ENCODE measurements at regions of chr11 and their contacts with region 1.

Region 1: DNA sequence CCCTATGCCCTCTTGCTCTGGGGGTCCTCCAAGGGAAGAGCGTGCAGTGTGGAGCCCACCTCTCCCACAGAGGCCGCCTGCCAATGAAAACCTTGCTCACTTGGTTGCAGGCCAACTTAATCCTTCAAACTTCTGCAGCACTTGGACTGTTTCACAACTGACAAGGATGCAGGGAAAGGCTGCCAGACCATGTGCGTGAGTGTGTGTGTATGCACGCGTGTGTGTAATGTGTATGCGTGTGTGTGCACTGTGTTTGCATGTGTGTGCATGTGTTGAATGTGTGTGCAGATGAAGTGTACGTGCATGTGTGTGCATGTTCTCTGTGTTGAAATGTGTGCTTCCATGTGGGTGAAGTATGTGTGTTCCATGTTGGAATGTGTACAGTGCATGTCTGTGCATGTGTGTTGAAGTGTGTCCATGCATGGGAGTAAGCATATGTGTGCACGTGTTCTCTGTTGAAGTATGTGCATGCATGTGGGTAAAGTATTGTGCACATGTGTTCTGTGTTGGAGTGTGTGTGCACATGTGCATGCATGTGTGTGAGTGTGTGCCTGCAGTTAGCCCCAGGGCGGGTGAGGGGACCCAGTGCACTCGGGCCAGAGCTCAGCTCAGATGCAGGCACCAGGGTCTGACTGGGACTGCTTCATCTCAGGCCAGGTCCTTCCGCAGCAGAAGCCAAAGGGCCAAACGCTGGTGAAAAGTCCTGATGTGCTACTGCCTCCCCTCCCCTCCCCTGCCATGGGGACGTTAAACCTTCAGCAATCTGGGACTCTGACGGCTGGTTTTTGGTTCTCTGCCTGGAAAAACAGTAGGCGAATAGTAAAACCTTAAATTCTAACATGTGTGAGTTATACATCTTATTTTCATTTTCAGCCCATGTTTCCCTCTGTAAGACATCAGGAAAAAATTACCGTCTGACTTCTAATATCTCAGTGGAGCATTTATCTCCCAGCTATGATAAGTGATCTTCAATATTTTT is 72.0 kb downstream of the FLI1 start:
- DNase-seq: no peak
- H3K4me3 ChIP-seq: no peak overlapping the region
- H3K4me3 Mint-ChIP-seq: no peak overlapping the region
- H3K27ac ChIP-seq: no peak overlapping the region
- H3K27ac Mint-ChIP-seq: no peak overlapping the region
- H3K4me1 ChIP-seq: no peaks in the 10 kb centered on the region
- H3K4me1 Mint-ChIP-seq: peaks cover 4% of the 10 kb centered on the region
- H3K27me3 ChIP-seq: no peaks in the 10 kb centered on the region
- H3K27me3 Mint-ChIP-seq: no peaks in the 10 kb centered on the region
- CTCF ChIP-seq: no peak

Region 2: DNA sequence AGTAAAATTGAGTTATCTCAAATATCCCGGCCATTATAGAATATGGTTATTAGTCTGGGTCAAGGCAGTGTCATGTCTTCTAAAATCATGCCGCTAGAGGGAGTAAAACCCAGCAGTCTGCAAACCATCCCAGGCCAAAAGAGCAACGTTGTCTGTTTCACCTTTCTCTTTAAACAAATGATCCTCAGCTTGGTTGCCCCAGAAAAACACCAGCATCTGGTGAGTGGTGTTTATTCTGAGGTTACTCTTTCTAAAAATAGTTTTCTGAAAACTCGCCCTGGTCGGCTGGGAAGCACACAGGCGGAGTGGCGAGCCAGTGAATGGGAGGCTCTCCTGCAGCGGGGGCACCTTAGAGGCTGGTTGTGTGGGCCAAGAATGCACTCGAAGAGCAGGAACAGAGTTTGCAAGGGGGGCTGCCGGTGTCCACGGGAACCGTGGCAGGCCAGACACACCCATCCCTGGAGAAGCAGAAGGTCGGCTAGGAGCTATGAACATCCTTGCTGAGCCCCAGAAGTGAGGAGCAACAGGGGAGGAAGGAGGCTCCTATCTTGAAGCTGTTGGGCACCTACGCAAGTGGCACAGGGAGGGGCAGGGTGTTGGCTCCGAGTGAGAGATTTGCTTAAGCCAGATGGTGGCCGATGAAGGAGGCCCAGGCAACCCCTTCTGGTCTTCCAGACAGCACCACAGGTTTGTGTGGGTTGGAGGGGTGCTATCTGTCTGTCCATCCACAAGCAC is 475.6 kb before region 1 on chr11:
- intact Hi-C with region 1: loop called in 1 of 2 experiments (anchors 10 kb)
- DNase-seq: peak; percentile 52 to 66 (median 61)
- H3K4me3 ChIP-seq: no peak overlapping the region
- H3K4me3 Mint-ChIP-seq: peak overlapping the region; percentile 47 to 74
- H3K27ac ChIP-seq: no peak overlapping the region
- H3K27ac Mint-ChIP-seq: peak overlapping the region in 3 of 7 donors; percentile 5 to 77 (median 54)
- H3K4me1 ChIP-seq: peaks cover 0 to 3% of the 10 kb centered on the region in 2 donors
- H3K4me1 Mint-ChIP-seq: peaks cover 6% of the 10 kb centered on the region
- H3K27me3 ChIP-seq: no peaks in the 10 kb centered on the region
- H3K27me3 Mint-ChIP-seq: peaks cover 0 to 4% (median 2%) of the 10 kb centered on the region in 3 donors
- CTCF ChIP-seq: peak; percentile 84

Region 3: GRCh38 chr11:128552783-128553661 is 212.8 kb before region 1 on chr11:
- intact Hi-C with region 1: no loop called
- DNase-seq: peak; percentile 93 to 95 (median 95)
- H3K4me3 ChIP-seq: peak overlapping the region in 1 of 3 experiments; percentile 29
- H3K4me3 Mint-ChIP-seq: peak overlapping the region; percentile 61 to 91
- H3K27ac ChIP-seq: peak overlapping the region; percentile 35 to 76
- H3K27ac Mint-ChIP-seq: peak overlapping the region; percentile 81 to 95 (median 93)
- H3K4me1 ChIP-seq: peaks cover 41 to 50% of the 10 kb centered on the region in 2 donors
- H3K4me1 Mint-ChIP-seq: peaks cover 61% of the 10 kb centered on the region
- H3K27me3 ChIP-seq: peaks cover 3 to 14% of the 10 kb centered on the region in 2 donors
- H3K27me3 Mint-ChIP-seq: peaks cover under 1 to 21% (median 21%) of the 10 kb centered on the region in 3 donors
- CTCF ChIP-seq: no peak

Region 4: GRCh38 chr11:128716661-128717210 is 49.1 kb before region 1 on chr11:
- intact Hi-C with region 1: no loop called
- DNase-seq: no peak
- H3K4me3 ChIP-seq: peak overlapping the region in 1 of 3 experiments; percentile 71
- H3K4me3 Mint-ChIP-seq: peak overlapping the region; percentile 66 to 84
- H3K27ac ChIP-seq: peak overlapping the region; percentile 92 to 94
- H3K27ac Mint-ChIP-seq: peak overlapping the region; percentile 95 to 100 (median 99)
- H3K4me1 ChIP-seq: peaks cover 100% of the 10 kb centered on the region in 2 donors
- H3K4me1 Mint-ChIP-seq: peaks cover 100% of the 10 kb centered on the region
- H3K27me3 ChIP-seq: no peaks in the 10 kb centered on the region
- H3K27me3 Mint-ChIP-seq: peaks cover 0 to 1% (median 0%) of the 10 kb centered on the region in 3 donors
- CTCF ChIP-seq: no peak

Region 5: DNA sequence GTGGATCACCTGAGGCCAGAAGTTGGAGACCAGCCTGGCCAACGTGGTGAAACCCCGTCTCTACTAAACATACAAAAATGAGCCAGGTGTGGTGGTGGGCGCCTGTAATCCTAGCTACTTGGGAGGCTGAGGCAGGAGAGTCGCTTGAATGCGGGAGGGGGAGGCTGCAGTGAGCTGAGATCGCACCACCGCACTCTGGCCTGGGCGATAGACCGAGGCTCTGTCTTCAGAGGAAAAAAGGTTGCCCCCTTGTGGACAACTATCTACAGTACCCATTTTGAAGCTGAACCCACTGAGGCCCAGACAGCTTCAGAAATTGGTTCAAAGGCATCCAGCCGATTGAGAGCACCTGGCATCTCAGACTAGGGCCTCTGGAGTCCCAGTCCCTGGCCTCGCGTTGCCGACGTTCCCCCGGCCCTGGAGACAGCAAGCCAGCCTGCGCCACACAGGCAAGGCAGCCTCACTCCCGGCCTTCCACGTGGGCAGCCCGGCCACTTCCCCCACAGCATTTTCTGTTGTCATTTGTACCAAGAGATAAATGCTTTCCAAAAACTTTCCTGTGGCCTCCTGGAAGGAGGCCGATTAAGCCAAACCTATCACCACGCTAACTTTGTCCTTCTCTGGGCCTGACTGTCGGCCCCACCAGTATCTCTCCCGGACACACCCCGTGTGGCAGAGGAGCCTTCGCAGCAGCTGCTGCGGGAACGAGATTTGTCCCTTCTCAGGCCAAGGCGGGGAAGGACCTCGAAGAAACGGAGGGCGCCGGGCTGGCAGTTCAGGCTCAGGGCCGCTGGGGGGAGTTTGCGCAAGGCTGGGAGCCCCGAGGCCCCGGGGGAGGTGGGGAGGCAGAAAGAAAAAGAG is 10.8 kb after region 1 on chr11:
- intact Hi-C with region 1: no loop called
- DNase-seq: peak in 1 of 3 donors; percentile 29
- H3K4me3 ChIP-seq: no peak overlapping the region
- H3K4me3 Mint-ChIP-seq: no peak overlapping the region
- H3K27ac ChIP-seq: no peak overlapping the region
- H3K27ac Mint-ChIP-seq: peak overlapping the region in 4 of 7 donors; percentile 23 to 64 (median 62)
- H3K4me1 ChIP-seq: peaks cover 6 to 8% of the 10 kb centered on the region in 2 donors
- H3K4me1 Mint-ChIP-seq: peaks cover 13% of the 10 kb centered on the region
- H3K27me3 ChIP-seq: no peaks in the 10 kb centered on the region
- H3K27me3 Mint-ChIP-seq: peaks cover 0 to 2% (median 0%) of the 10 kb centered on the region in 3 donors
- CTCF ChIP-seq: peak; percentile 62

Region 6: DNA sequence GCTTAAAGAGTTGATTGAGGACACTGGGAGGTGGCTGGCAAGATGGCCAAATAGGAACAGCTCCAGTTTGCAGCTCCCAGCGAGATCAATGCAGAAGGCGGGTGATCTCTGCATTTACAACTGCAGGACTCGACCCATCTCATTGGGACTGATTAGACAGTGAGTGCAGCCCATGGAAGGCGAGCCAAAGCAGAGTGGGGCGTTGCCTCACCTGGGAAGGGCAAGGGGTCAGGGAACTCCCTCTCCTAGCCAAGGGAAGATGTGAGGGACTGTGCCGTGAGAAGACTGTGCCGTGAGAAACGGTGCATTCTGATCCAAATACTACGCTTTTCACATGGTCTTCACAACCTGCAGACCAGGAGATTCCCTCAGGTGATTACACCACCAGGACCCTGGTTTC is 389.9 kb after region 1 on chr11:
- intact Hi-C with region 1: no loop called
- DNase-seq: no peak
- H3K4me3 ChIP-seq: no peak overlapping the region
- H3K4me3 Mint-ChIP-seq: no peak overlapping the region
- H3K27ac ChIP-seq: no peak overlapping the region
- H3K27ac Mint-ChIP-seq: no peak overlapping the region
- H3K4me1 ChIP-seq: no peaks in the 10 kb centered on the region
- H3K4me1 Mint-ChIP-seq: no peaks in the 10 kb centered on the region
- H3K27me3 ChIP-seq: no peaks in the 10 kb centered on the region
- H3K27me3 Mint-ChIP-seq: peaks cover 0 to 1% (median 0%) of the 10 kb centered on the region in 3 donors
- CTCF ChIP-seq: no peak